PC-9 (cell line): ENCODE measurements at regions of chr7 and their contacts with region 1.

Region 1: GRCh38 chr7:41491883-41492471 is 210.9 kb downstream of the INHBA start:
- DNase-seq: no peak
- H3K4me3 ChIP-seq: no peak overlapping the region
- H3K27ac ChIP-seq: no peak overlapping the region
- H3K4me1 ChIP-seq: no peaks in the 10 kb centered on the region
- H3K27me3 ChIP-seq: no peaks in the 10 kb centered on the region
- CTCF ChIP-seq: no peak

Region 2: DNA sequence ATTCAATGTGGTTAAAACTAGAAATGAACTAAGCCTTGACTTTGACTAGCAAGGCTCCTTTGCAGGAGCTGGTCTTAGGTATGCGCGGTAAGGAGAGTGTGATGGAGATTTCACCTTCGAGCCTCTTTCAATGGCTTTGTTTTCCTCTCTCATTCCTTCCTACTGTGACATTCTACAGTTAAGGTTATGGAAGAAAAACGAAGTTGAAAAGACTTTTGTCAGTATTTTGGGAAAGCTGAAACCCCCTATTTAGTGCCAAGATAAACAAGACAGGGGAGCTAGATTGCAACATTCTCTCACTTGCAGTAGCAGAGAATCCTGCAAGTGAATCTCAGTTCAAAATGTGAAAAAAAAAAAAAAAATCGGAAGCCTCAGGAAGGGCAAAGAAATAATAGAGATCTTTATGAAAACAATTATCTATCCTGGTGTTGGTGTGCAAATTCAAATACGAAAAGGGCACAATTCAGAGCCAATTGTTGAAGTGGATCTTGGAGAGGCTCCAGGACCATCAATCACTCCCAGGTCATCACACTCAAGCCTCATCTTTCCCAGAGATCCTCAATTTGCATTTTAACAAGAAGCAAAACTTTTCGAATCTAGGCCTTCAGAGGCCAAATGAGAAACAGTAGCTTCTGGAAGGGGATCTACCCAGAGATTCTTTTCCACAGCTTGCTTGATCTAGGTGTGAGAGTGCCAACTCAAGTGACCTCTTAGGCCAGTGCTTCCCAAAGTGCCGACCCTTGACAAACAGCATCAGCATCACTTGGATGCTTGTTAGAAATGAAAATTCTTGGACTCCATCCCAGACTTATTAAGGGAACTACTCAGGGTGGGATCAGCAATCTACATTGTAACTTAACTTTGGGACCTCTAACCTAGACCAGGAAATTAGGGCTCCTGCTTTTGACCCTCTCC is 47.1 kb after region 1 on chr7:
- CTCF ChIA-PET with region 1: no interaction called
- POLR2A ChIA-PET with region 1: interaction called, 10 read pairs
- intact Hi-C with region 1: no loop called
- DNase-seq: no peak
- H3K4me3 ChIP-seq: no peak overlapping the region
- H3K27ac ChIP-seq: no peak overlapping the region
- H3K4me1 ChIP-seq: no peaks in the 10 kb centered on the region
- H3K27me3 ChIP-seq: no peaks in the 10 kb centered on the region
- CTCF ChIP-seq: no peak

Region 3: DNA sequence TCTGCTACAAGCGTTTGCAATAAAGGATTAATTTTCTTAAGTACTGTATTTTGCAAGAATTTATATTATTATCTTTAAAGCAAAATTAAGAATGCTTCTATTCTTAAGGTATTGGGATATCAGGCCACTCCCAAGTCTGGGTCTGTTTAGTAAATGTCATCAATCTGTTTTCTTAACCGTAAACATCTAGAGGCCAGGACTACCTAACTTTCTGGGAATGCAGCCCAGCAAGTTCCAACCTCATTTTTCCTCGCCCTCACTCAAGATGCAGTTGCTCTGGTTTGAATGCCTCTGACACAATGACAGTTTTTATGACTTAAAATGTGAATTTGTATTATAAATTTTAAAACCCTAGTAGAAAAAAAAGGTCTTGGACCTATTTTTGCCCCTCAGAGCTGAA is 67.4 kb after region 1 on chr7:
- CTCF ChIA-PET with region 1: no interaction called
- POLR2A ChIA-PET with region 1: no interaction called
- intact Hi-C with region 1: no loop called
- DNase-seq: peak; percentile 57 to 83
- H3K4me3 ChIP-seq: no peak overlapping the region
- H3K27ac ChIP-seq: peak overlapping the region; percentile 50
- H3K4me1 ChIP-seq: peaks cover 20% of the 10 kb centered on the region
- H3K27me3 ChIP-seq: no peaks in the 10 kb centered on the region
- CTCF ChIP-seq: no peak